ENCODE measurements at regions of chr12 and their contacts with region 1.

Region 1: DNA sequence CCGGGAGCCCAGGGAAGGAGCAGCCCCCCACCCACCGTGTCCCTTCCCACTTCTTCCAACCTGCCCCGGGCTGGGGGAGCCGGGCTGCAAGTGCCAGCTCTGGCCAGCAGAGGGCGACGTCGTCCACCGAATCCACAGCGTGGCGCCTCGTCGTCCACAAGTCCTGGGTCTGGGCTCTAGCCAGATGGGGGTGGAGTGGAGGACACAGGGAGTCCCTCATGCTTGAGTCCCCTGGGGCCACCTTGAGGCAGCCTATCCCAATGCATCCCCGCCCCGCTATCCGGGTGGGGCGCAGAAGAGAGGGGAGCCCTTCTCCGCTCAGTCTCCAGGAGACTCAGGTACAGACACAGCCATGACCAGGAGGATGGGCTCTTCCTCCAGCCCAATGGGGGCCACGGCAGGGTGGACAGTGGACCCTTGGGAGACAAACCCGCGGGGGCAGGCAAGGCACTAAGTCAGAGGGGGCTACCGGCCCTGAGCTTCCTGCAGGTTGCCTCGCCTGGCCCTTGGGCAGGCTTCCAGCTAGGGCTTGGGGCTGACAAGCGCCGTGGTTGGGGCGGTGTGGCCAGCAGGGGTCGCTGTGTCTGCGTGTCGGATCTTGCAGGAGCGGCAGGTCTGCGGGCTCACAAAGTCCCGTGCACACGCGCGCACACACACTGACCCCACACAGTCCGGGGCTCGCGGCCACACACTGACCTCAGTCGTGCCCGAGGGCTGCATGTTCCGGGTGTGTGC is 5.5 kb downstream of the AQP5 start:
- DNase-seq: peak; percentile 86 to 96
- ATAC-seq: peak; percentile 86

Region 2: DNA sequence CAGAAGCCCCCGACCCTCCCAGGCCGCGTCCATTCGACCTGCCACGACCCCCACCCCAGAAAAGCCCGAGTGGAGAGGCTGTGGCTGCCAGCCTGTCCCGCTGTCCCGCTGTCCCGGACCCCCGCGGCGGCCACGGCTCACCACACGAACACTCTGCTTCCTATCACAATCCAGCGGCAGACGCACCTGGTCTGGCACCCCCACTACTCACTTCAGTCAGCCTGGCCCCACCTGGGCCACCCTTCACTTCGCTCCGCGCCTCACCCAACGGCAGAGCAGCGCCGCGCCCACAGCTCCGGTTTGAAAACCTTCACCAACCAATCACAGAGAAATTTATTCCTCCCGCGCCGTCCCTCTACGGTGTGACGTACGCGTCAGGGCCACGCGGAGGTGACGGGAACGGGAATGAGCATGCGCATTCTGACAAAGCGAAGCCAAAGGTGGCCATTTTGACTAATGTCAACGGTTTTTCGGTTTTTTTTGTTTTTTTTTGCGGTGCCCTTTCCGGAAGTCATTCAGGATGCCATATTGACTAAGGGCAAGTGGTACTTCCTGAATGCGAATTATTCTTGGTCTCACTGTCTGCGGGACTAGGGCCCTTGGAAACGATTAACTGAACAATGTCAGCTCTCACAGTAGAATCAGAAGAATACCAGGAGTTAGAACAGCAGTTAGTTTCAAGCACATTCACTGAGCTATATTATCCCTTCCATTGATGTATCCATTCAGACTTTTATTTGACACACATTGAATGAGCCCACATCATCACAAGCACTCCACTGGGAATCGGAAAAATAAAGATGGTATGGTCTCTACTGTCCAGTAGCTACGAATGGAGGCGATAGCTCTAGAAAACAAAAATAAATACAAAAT is 58.2 kb after region 1 on chr12 and contains the start of gene RACGAP1:
- intact Hi-C with region 1: no loop called
- DNase-seq: peak; percentile 95 to 97
- ATAC-seq: peak; percentile 99
- total RNA-seq, gene RACGAP1: 20.0 to 25.4 TPM

Region 3: GRCh38 chr12:50055831-50056638 is 88.8 kb after region 1 on chr12:
- intact Hi-C with region 1: loop called (anchors 5 to 10 kb)
- DNase-seq: peak in 1 of 2 donors; percentile 51
- ATAC-seq: peak; percentile 65

Region 4: GRCh38 chr12:50066433-50066832 is 99.2 kb after region 1 on chr12:
- intact Hi-C with region 1: loop called in 1 of 2 experiments (anchors 5 kb)
- DNase-seq: no peak
- ATAC-seq: no peak

Region 5: GRCh38 chr12:50117057-50117622 is 149.9 kb after region 1 on chr12:
- intact Hi-C with region 1: no loop called
- DNase-seq: no peak
- ATAC-seq: no peak